PC-3 (cell line): ENCODE measurements at regions of chr10 and their contacts with region 1.

Region 1: DNA sequence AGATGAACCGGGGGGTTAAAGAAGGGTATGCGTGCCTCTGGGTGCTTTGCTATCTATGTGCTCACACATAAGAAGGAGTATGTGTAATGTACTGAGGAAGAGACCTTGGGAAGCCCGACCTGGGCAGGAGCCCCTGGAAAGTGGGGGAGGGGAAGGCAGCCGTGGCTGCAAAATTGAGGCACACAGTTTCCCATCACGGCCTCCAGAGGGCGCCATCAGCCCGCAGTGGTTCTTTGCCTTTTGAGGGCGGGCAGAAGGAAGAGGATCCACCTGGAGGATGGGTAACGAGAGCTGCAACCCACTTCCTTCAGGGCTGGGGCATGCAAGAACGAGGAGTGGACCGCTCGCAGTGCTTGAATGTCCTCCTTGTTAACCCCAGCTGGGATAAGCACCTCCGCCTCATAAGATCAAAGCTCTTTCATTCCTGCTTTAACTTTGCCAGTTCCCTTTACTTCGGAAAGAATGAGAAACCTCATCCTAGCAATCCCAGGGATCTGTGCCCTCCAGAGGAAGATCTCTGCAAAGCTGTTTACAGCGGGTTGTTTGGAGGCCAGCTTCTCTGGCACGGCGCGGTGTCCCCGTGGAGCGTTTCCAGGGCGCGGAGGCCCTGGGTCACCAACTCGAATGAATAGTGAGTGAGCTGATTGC is 77.9 kb downstream of the PCGF5 start:
- DNase-seq: peak; percentile 74
- ATAC-seq: peak; percentile 80
- H3K4me3 ChIP-seq: peak overlapping the region; percentile 44
- H3K27ac ChIP-seq: no peak overlapping the region
- H3K4me1 ChIP-seq: peaks cover 16% of the 10 kb centered on the region
- H3K27me3 ChIP-seq: no peaks in the 10 kb centered on the region
- CTCF ChIP-seq: peak; percentile 79

Region 2: DNA sequence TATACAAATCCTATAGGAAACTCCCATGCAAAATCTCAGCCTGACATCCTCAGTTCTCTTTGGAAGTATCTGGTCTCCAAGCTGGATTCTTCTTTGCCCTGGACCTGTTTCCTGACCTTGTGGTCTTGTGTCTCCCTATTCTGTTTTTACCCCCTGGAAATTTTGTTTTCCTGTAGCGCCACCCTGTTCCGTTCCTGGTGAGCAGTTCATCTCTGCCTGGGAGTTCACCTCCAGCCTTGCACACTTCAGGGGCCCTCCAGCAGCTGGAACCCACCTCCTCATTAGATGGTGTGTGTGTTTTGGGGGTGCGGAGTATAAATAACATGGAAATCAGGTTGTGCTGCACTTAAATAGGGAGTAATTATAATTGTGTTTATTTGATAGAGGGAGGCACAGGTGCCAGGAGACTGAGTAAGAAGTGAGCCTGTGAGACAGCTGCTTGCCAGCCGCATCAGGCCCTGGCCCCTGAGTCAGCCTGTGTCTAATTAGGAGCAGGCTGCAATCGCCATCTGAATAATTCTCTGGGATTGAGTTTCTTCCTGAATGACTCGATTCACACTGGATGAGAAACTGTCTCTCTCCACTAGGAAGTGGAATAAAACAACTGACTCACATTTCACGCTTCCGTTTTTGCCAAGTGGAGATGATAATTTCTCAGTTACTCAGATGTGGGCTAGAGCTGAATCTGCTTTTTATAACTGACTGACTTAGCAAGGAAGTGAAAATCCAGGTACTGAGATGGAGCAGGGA is 42.4 kb after region 1 on chr10:
- CTCF ChIA-PET with region 1: no interaction called
- POLR2A ChIA-PET with region 1: no interaction called
- intact Hi-C with region 1: loop called (anchors 1 kb)
- DNase-seq: peak; percentile 67
- ATAC-seq: peak; percentile 89
- H3K4me3 ChIP-seq: no peak overlapping the region
- H3K27ac ChIP-seq: 0 out of 2 replicates have a peak overlapping the region, but pooled peaks have one; percentile 26
- H3K4me1 ChIP-seq: peaks cover 16% of the 10 kb centered on the region
- H3K27me3 ChIP-seq: no peaks in the 10 kb centered on the region
- CTCF ChIP-seq: no peak

Region 3: GRCh38 chr10:91367127-91367531 is 68.8 kb after region 1 on chr10:
- CTCF ChIA-PET with region 1: interaction called, 26 read pairs
- POLR2A ChIA-PET with region 1: no interaction called
- intact Hi-C with region 1: loop called (anchors 1 kb)
- DNase-seq: no peak
- ATAC-seq: no peak
- H3K4me3 ChIP-seq: no peak overlapping the region
- H3K27ac ChIP-seq: no peak overlapping the region
- H3K4me1 ChIP-seq: no peaks in the 10 kb centered on the region
- H3K27me3 ChIP-seq: no peaks in the 10 kb centered on the region
- CTCF ChIP-seq: no peak

Region 4: DNA sequence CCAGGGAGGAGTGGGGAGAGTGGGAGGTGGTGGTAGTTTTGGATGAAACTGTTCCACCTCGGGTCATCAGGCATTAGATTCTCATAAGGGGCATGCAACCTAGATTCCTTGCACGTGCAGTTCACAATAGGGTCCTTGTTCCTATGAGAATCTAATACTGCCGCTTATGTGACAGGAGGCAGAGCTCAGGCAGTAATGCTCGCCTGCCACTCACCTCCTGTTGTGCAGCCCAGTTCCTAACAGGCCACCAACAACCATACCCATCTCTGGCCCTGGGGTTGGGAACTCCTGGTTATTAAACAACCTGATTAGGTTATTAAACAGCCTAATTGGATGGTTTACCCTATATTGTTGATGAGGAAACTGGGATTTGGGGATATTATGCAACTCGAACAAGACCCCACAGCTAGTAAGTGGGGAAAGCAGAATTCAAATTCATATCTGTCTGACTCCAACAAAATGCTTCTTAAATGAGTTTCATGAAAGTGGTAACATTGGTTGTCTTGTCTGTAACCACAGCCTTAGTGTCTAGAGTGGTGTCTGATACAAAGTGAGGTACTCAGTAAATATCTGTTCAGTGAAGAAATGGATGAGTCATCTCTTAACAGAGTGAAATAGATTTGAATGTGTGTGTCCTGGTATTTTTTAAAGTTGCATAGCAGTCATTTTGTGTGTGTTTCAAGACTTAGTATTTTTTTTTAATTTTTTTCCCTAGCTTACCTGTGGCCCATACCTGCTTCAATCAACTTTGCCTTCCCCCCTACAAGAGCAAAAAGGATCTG is 213.4 kb after region 1 on chr10:
- CTCF ChIA-PET with region 1: no interaction called
- POLR2A ChIA-PET with region 1: no interaction called
- intact Hi-C with region 1: no loop called
- DNase-seq: peak; percentile 56
- ATAC-seq: peak; percentile 84
- H3K4me3 ChIP-seq: no peak overlapping the region
- H3K27ac ChIP-seq: peak overlapping the region; percentile 26; the same call in 1 of the 2 replicates
- H3K4me1 ChIP-seq: peaks cover 27% of the 10 kb centered on the region
- H3K27me3 ChIP-seq: no peaks in the 10 kb centered on the region
- CTCF ChIP-seq: no peak